Prostate gland (tissue), 2 donors: ENCODE measurements at regions of chr5 and their contacts with region 1.

Region 1: GRCh38 chr5:176415952-176416924 is at the start of gene CLTB:
- DNase-seq: peak; percentile 92
- H3K4me3 ChIP-seq: peak within 1 kb of the TSS; percentile 92 to 98
- H3K27ac ChIP-seq: peak within 1 kb of the TSS; percentile 83 to 85
- H3K4me1 ChIP-seq: no peaks in the 10 kb centered on the region
- H3K27me3 ChIP-seq: no peaks in the 10 kb centered on the region
- CTCF ChIP-seq: peak; percentile 83 to 98 (median 93)
- POLR2A ChIP-seq: peak; percentile 90
- total RNA-seq, gene CLTB: 105 to 125 TPM

Region 2: DNA sequence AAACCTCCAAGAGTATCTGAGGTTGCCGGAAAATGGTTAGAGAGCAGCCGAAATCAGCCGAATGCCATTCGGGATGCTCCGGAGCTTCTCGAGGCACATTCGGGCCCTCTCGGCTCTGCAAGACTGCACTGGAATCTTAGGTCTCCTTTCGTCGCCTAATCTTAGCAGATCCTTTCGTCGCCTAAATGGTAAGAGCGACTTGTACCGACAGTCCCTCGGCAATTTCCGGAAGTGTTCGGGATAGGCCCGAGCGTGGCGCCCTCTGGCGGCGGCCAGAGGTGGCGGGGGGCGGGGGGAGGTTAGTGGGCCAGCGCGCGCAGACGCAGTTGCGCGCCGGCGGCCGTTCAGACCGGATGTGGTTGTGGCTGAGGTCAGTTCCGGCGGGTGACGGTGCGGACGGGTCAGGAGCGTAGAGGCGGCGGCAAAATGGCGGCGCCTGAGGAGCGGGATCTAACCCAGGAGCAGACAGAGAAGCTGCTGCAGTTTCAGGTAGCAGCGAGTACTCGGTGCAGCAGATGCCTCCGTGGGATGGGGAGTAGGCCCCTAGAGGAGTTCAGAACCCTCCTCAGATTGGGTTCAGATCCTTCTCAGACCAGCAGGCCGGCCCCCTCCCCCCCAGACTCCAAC is 31.9 kb after region 1 on chr5 and contains the start of gene FAF2:
- intact Hi-C with region 1: loop called (anchors 2 kb)
- DNase-seq: peak; percentile 96
- H3K4me3 ChIP-seq: peak within 1 kb of the TSS; percentile 92
- H3K27ac ChIP-seq: peak within 1 kb of the TSS; percentile 94 to 95
- H3K4me1 ChIP-seq: peaks cover 11% of the 10 kb centered on the region
- H3K27me3 ChIP-seq: no peaks in the 10 kb centered on the region
- CTCF ChIP-seq: peak; percentile 98 to 100 (median 100)
- POLR2A ChIP-seq: peak; percentile 64
- total RNA-seq, gene FAF2: 36.8 to 43.5 TPM

Region 3: DNA sequence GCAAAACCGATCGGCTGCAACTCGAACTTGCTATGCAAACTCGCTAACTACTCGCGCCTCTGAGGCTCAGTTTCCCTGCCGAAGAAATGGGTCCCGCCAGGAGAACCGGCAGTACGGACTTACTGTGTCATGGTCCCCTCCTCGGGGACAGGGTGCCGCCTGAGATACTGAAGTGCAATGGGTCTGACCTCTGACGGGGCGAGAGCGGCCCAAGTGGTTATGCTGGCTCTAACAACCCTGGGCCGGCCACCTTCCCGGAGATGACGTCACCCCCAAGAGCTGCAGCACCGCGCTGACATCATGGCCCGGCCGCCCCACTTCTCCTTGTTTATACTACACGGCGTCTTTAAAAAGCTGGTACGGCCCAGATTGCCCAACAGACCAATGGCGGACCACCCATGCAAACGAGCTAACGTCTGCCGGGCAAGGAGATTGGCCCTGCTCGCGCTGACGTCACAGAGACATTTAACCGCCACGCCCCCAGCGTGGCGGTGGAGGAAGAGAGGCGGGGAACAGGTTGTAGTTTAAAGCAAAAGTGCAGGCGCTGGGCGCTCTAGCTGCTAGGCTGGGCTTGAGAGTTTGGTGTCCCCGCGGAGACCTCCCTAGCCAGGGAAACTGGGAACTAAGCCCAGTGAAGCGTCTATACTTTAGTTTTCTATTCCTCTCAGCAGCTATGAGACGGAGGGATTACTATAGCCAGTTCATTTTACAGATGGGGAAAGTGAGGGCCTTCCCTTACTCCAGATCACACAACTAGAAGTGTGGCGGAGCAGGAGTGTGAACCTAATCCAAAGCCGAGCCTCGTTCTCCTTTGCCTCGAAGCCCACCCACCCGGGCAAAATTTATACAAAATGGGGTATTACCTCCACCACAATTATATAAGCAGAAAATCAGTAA is 121.6 kb after region 1 on chr5:
- intact Hi-C with region 1: loop called (anchors 5 kb)
- DNase-seq: peak; percentile 100
- H3K4me3 ChIP-seq: peak overlapping the region; percentile 92 to 95
- H3K27ac ChIP-seq: peak overlapping the region; percentile 98
- H3K4me1 ChIP-seq: peaks cover 14% of the 10 kb centered on the region
- H3K27me3 ChIP-seq: no peaks in the 10 kb centered on the region
- CTCF ChIP-seq: peak in 1 of 4 experiments; percentile 15
- POLR2A ChIP-seq: peak; percentile 89

Region 4: GRCh38 chr5:176573564-176574296 is 157.5 kb after region 1 on chr5:
- intact Hi-C with region 1: loop called (anchors 10 kb)
- DNase-seq: peak; percentile 29
- H3K4me3 ChIP-seq: no peak overlapping the region
- H3K27ac ChIP-seq: no peak overlapping the region
- H3K4me1 ChIP-seq: no peaks in the 10 kb centered on the region
- H3K27me3 ChIP-seq: no peaks in the 10 kb centered on the region
- CTCF ChIP-seq: peak; percentile 54 to 66 (median 54)
- POLR2A ChIP-seq: no peak

Region 5: DNA sequence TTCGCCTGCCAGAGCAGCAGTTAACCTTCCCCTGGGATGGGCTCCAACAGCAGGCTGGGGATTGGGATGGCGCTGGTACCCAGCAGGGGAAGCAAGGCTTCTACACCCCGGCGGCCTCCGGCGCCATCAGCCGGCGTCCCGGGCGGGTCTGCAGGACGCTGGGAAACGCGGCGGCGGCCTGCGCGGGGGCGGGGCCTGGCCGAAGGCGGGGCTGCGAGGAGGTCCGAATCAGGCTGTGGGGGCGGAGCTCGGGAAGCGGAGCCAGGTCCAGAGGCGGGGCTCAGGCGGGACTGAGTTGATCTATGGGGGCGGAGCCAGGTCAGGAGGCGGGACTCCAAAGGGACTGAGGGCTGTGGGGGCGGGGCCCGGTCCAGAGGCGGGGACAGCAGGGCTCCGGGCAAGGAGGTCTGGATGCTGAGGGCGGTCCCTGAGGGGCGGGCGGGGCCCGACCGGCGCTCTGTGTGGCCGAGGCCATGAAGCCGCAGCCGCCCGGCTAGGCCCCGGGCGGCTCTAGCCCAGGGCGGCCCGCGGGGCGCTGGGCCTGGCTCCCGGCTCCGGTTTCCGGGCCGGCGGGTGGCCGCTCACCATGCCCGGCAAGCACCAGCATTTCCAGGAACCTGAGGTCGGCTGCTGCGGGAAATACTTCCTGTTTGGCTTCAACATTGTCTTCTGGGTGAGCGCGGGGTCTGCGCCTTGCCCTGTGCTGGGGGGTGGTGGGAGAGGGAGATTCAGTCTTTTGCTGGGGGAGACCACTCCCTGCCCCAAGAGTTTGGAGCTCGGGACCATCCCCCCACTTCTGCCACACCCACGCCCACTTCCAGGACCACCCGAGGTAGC is 231.0 kb after region 1 on chr5 and contains the start of gene TSPAN17:
- intact Hi-C with region 1: loop called (anchors 10 kb)
- DNase-seq: peak; percentile 100
- H3K4me3 ChIP-seq: peak within 1 kb of the TSS; percentile 54 to 64
- H3K27ac ChIP-seq: peak within 1 kb of the TSS; percentile 48 to 63
- H3K4me1 ChIP-seq: peaks cover 4% of the 10 kb centered on the region
- H3K27me3 ChIP-seq: no peaks in the 10 kb centered on the region
- CTCF ChIP-seq: peak in 3 of 4 experiments; percentile 12 to 46 (median 45)
- POLR2A ChIP-seq: peak; percentile 71
- total RNA-seq, gene TSPAN17: 17.6 to 38.1 TPM